ENCODE measurements at regions of chr5 and their contacts with region 1.

Region 1: DNA sequence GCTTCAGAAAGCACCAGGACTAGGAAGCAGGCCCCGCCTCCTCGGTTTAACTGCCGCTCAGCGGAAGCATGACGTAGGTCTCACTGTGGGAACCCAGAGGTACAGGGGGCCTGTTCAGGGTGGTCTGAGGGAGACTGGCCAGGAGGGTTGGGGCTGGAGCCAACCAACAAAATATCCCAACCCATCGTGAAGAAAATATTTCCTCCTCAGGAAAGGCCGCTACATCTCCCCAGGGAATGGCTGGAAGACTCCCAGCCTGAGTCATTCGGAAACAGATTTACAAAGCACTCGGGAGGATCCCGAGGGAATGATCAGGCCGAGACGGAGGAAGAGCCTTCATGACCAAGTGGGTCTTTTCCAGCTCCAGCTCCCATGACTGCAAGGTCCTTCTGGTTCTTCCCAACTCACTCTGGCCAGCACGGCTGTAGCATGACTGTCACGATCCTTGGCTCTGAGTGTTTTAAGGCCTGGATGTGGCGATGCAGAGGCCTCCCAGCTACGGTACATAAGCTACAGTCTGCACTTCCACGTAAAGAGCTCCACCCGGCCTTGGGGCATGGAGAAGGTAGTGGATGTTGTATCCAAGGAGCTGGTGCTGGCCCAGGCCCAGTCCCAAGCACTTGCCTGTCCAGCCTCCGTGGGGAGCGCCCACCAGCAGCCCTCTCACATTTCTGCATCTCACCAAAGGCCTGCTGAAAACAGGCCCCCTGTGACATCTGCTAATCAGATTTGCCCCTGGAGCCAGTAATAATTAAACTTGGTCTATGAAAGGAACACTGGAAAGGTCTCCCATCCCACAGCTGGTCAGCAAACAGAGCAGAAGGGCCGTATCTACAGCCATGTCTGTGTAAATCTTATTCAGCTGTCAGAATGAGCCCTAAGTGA is 100.6 kb downstream of the LHFPL2 start:
- DNase-seq: peak; percentile 92
- H3K4me3 ChIP-seq: no peak overlapping the region
- H3K27ac ChIP-seq: peak overlapping the region; percentile 79
- H3K4me1 ChIP-seq: peaks cover 66% of the 10 kb centered on the region
- H3K27me3 ChIP-seq: no peaks in the 10 kb centered on the region
- CTCF ChIP-seq: no peak

Region 2: DNA sequence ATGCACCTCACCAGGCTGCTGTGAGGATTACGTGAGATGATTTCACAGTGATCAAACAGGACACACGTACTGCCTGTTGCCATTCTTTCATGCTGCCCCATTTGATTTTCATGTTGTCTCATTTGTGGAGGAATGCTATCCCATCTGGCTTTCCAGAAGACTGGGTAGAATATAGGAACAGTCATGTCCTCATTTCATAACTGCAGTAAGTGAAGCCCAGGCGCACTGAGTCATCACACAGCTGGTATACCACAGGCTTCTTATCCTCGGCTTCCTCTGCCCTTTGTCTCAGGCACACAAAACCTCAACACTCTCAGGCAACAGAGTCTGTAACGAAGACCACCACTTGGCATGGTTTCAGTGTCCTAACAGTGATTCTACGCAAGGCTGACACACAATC is 38.3 kb after region 1 on chr5:
- intact Hi-C with region 1: no loop called
- DNase-seq: no peak
- H3K4me3 ChIP-seq: no peak overlapping the region
- H3K27ac ChIP-seq: no peak overlapping the region
- H3K4me1 ChIP-seq: peaks cover 26% of the 10 kb centered on the region
- H3K27me3 ChIP-seq: no peaks in the 10 kb centered on the region
- CTCF ChIP-seq: no peak

Region 3: DNA sequence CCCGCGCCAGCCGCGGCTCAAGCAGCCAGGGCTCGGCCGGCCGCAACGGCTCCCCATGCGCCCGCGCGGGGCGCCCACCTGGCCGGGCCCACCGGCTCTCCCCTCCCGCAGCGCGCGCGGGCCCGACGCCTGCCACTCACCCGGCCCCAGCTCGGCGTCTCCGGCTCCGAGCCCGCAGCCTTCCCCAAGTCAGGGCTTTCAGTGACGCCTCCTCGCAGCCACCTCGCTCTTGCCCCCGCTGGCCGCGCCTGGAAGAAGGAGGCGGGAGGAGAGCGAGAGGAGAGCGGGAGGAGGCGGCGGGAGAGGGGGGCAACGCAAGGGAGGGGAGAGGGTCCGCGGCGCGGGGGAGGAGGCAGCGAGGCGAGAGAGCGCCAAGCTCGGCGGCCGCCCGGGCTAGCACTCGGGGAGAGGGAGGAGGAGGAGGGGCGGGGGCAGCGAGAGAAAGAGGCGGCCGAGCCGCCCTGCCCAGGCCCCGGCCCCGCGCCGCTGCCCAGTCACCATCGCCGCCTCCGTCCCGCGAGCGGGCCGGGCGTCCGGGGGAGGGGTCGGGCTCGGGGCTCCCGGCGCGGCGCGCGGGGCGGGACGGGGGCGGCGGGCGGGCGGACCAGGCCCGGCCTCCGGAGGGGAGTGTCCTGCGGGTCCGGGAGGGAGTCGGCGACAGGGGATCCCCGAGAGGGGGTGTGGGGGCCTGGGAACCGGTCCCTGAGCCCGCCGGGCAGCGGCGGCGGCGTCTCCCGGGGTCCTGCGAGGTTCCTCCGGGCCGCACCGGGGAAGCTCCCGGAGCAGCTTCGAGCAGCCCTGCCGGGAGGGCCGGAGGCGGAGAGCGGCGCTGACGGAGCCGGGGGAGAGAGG is 100.6 kb after region 1 on chr5 and contains the start of gene LHFPL2:
- intact Hi-C with region 1: loop called (anchors 10 kb)
- DNase-seq: peak; percentile 84
- H3K4me3 ChIP-seq: peak within 1 kb of the TSS; percentile 87
- H3K27ac ChIP-seq: peak within 1 kb of the TSS; percentile 93
- H3K4me1 ChIP-seq: peaks cover 34% of the 10 kb centered on the region
- H3K27me3 ChIP-seq: no peaks in the 10 kb centered on the region
- CTCF ChIP-seq: no peak
- total RNA-seq, gene LHFPL2: 5.0 TPM

Measured in left ventricle myocardium inferior (tissue), 1 donor.